Activated T-helper 2 cell treated with anti-CD3 and anti-CD28 coated beads, Interferon-gamma antibody, Interleukin-2, Interleukin-4, amounts not matched to agents 10 μg/mL and 5 μg/mL and 100 μg/mL, durations not matched to agents 14 hours and 24 hours and 36 hours (primary cell): ENCODE measurements at regions of chr4 and their contacts with region 1.

Region 1: DNA sequence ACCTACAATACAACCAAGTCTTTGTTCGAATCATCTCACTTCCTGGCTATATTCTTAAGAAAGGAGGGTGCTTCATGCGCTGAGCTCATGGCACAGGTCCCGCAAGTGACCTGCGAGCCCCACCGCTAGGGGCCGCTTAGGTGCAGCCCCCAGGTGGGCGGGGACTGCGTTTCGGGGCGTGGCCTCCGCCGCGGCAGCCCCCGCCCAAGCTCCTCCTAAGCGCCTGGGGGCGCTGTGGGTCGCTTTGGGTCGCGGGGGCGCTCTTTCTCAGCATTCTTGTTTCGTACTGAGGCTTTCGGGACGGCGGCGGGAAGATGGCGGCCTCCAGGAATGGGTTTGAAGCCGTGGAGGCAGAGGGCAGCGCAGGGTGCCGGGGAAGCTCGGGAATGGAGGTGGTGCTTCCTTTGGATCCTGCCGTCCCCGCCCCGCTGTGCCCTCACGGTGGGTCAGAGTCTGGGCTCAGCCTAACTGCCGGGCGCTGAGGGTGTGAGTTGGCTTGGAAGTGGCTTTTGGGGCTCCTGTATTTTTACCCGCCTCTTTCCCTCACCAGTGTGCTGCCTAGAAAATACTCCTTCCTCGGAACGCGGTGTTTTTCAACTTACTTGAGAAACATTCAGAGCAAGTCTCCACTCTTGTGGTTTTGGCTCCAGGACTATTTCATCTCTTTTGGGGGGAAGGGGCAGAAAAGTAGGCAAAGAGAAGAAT is at the start of gene ZCCHC4:
- DNase-seq: peak; percentile 87
- H3K4me3 Mint-ChIP-seq: peak within 1 kb of the TSS; percentile 99
- H3K27ac Mint-ChIP-seq: peak within 1 kb of the TSS; percentile 95
- H3K4me1 Mint-ChIP-seq: peaks cover 24% of the 10 kb centered on the region
- H3K27me3 Mint-ChIP-seq: no peaks in the 10 kb centered on the region
- total RNA-seq, gene ZCCHC4: 14.8 and 15.1 TPM in 2 replicates

Region 2: GRCh38 chr4:25180524-25181131 is 132.0 kb before region 1 on chr4:
- intact Hi-C with region 1: loop called (anchors 2 kb)
- DNase-seq: no peak
- H3K4me3 Mint-ChIP-seq: no peak overlapping the region
- H3K27ac Mint-ChIP-seq: no peak overlapping the region
- H3K4me1 Mint-ChIP-seq: peaks cover 12% of the 10 kb centered on the region
- H3K27me3 Mint-ChIP-seq: no peaks in the 10 kb centered on the region

Region 3: GRCh38 chr4:25234390-25235370 is 78.0 kb before region 1 on chr4:
- intact Hi-C with region 1: loop called (anchors 1 kb)
- DNase-seq: peak; percentile 40
- H3K4me3 Mint-ChIP-seq: peak overlapping the region; percentile 95
- H3K27ac Mint-ChIP-seq: peak overlapping the region; percentile 98
- H3K4me1 Mint-ChIP-seq: peaks cover 35% of the 10 kb centered on the region
- H3K27me3 Mint-ChIP-seq: no peaks in the 10 kb centered on the region

Region 4: GRCh38 chr4:25330905-25331808 is 18.5 kb after region 1 on chr4:
- intact Hi-C with region 1: loop called (anchors 1 kb)
- DNase-seq: no peak
- H3K4me3 Mint-ChIP-seq: peak overlapping the region; percentile 72
- H3K27ac Mint-ChIP-seq: peak overlapping the region; percentile 89
- H3K4me1 Mint-ChIP-seq: peaks cover 16% of the 10 kb centered on the region
- H3K27me3 Mint-ChIP-seq: no peaks in the 10 kb centered on the region

Region 5: GRCh38 chr4:25367004-25367621 is 54.5 kb after region 1 on chr4:
- intact Hi-C with region 1: loop called (anchors 2 kb)
- DNase-seq: no peak
- H3K4me3 Mint-ChIP-seq: no peak overlapping the region
- H3K27ac Mint-ChIP-seq: no peak overlapping the region
- H3K4me1 Mint-ChIP-seq: no peaks in the 10 kb centered on the region
- H3K27me3 Mint-ChIP-seq: no peaks in the 10 kb centered on the region

Region 6: DNA sequence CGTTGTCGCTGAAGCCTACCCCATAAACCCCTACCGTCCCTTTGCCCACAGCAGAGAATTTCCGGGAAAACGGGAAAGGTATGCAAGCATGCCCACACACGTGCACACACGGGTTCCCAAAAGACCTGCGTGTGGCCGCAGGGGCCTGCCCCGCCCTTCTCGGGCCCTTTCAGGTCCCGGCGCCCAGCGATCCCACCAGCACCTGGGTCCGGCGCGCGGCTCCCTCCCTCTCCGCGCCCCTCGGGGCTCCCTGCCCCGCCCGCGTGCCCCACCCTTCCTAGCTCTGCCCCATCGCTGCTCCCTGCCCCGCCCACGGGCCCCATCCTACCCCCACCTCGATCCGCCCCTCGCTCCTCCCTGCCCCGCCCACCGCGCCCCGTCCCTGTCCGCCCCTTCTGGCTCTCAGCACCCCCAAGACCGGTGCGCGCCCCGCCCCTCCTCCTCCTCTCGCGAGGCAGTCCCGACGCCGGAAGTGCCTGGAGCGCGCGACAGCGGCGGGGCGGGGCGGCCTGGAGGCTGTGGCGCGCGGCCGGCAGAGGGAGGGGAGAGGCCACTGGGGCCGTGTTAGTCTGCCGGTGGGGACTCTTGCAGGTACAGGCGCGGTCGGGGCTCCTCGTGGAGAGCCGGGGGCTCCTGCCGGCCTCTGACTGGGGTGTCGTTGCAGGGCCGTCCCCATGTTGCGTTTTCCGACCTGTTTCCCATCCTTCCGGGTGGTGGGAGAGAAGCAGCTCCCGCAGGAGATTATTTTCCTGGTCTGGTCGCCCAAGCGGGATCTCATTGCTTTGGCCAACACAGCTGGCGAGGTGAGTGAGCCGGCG is 64.3 kb after region 1 on chr4 and contains the start of gene ANAPC4:
- intact Hi-C with region 1: loop called (anchors 1 kb)
- DNase-seq: peak; percentile 93
- H3K4me3 Mint-ChIP-seq: no peak within 1 kb of the TSS
- H3K27ac Mint-ChIP-seq: peak within 1 kb of the TSS; percentile 89
- H3K4me1 Mint-ChIP-seq: peaks cover 4% of the 10 kb centered on the region
- H3K27me3 Mint-ChIP-seq: no peaks in the 10 kb centered on the region
- total RNA-seq, gene ANAPC4: 39.5 and 40.9 TPM in 2 replicates

Region 7: GRCh38 chr4:25466966-25467697 is 154.5 kb after region 1 on chr4:
- intact Hi-C with region 1: no loop called
- DNase-seq: no peak
- H3K4me3 Mint-ChIP-seq: no peak overlapping the region
- H3K27ac Mint-ChIP-seq: no peak overlapping the region
- H3K4me1 Mint-ChIP-seq: no peaks in the 10 kb centered on the region
- H3K27me3 Mint-ChIP-seq: no peaks in the 10 kb centered on the region